ENCODE measurements at regions of chr2 and their contacts with region 1.

Region 1: DNA sequence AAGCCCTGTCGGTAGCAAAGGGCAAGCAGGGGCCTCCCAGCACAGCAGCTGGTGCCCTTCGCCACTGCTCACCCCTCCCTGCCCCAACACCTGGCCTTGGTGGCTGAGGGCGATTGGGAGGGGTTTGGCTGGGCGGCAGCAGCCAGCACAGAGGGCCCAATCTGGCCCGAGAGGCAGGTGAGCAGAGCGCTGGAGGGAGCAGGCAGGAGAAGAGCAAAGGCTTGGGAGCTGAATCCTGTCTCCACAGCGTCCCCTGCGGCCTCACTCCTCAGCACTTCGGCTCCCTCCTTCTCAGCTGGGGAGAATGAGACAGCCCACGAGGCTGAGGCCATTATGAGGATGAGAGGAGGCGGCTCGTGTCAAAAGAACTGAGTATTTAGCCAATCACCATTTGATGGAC is 74.9 kb upstream of the TAF1B start:
- DNase-seq: peak in 3 of 10 donors; percentile 41 to 66 (median 60)
- H3K4me3 ChIP-seq: no peak overlapping the region
- H3K27ac ChIP-seq: peak overlapping the region in 21 of 59 donors; percentile 26 to 90 (median 78)
- H3K27me3 ChIP-seq: no peaks in the 10 kb centered on the region
- CTCF ChIP-seq: peak in 13 of 56 donors; percentile 6 to 32 (median 14)

Region 2: DNA sequence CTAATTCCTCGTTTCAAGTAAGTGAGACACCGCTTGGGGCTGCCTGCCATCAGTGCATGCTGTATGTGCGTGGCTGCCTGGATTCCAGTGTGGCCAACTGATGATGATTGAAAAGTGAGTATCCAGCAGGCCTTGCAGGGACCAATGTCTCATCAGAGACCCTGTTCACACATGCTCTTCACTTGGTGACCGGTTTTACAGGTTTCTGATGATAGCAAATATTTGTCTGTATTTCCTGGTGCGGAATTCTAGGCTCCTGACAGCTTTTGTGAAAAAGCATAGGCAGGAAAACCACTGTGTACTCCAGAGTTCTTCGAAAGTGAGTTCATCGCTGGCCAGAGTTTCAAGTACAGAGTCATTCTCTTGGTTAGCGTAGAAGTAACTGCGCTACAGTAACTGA is 123.8 kb before region 1 on chr2:
- intact Hi-C with region 1: loop called (anchors 10 kb)
- DNase-seq: no peak
- H3K4me3 ChIP-seq: no peak overlapping the region
- H3K27ac ChIP-seq: peak overlapping the region in 3 of 59 donors; percentile 5 to 55 (median 19)
- H3K27me3 ChIP-seq: no peaks in the 10 kb centered on the region
- CTCF ChIP-seq: no peak

Region 3: DNA sequence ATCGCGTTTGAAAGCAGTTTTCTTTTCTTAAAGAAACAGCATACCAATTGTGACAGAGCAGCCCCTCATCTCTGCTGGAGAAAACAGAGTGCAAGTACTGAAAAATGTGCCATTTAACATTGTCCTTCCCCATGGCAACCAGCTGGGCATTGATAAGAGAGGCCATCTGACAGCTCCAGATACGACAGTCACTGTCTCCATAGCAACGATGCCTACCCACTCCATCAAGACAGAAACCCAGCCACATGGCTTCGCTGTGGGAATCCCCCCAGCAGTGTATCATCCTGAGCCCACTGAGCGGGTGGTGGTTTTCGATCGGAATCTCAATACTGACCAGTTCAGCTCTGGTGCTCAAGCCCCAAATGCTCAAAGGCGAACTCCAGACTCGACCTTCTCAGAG is 192.6 kb after region 1 on chr2:
- intact Hi-C with region 1: no loop called
- DNase-seq: peak in 2 of 10 donors; percentile 34 to 38
- H3K4me3 ChIP-seq: peak overlapping the region in 49 of 59 donors; percentile 1 to 54 (median 28)
- H3K27ac ChIP-seq: peak overlapping the region in 6 of 59 donors; percentile 3 to 31 (median 23)
- H3K27me3 ChIP-seq: no peaks in the 10 kb centered on the region
- CTCF ChIP-seq: no peak